AG04449 (cell line): ENCODE measurements at regions of chr1 and their contacts with region 1.

Region 1: GRCh38 chr1:172429331-172430127 is 9.0 kb downstream of the C1orf105 start:
- DNase-seq: no peak
- H3K4me3 ChIP-seq: no peak overlapping the region
- CTCF ChIP-seq: peak; percentile 59

Region 2: DNA sequence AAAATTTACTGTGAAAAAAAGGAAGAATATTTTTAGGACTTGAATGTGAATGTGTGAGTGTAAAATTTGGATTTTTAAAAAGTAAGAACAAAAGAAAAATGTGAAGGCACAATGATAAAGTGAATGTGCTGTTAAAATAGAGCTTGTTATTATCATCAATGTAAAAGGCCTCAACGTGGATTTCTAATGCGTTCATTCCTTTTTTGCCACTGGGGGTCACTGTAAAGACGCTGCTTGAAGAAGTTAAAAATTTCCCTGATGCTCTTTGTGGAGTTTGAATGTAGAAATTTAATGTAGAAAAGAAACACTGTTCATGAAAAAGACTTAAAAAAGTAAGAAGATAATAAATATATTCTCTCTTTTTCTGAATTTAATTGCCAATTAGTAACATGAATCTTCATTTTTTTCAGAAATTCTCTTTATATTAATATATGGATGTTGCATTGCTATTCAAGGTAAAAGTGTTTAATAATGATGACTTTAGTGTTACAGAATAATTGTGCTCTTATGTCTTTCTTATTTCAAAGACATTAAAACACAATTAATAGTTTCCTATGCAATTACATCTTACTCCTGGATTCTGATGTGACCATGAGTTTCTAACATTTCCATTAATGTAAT is 426.7 kb before region 1 on chr1:
- CTCF ChIA-PET with region 1: interaction called, 193 read pairs
- POLR2A ChIA-PET with region 1: no interaction called
- DNase-seq: no peak
- H3K4me3 ChIP-seq: no peak overlapping the region
- CTCF ChIP-seq: peak; percentile 56

Region 3: GRCh38 chr1:172414331-172414730 is 15.2 kb before region 1 on chr1:
- CTCF ChIA-PET with region 1: interaction called, 30 read pairs
- POLR2A ChIA-PET with region 1: no interaction called
- DNase-seq: no peak
- H3K4me3 ChIP-seq: no peak overlapping the region
- CTCF ChIP-seq: no peak

Region 4: GRCh38 chr1:172443626-172444453 is 14.3 kb after region 1 on chr1 and contains the start of gene PIGC:
- CTCF ChIA-PET with region 1: interaction called, 10 read pairs
- POLR2A ChIA-PET with region 1: no interaction called
- DNase-seq: no peak
- H3K4me3 ChIP-seq: peak within 1 kb of the TSS; percentile 89
- CTCF ChIP-seq: peak; percentile 98